Activated CD4-positive, alpha-beta T cell treated with anti-CD3 and anti-CD28 coated beads, Interleukin-2, amount 10 ng/mL, durations not matched to agents 7 days and 5 days (primary cell): ENCODE measurements at regions of chr10 and their contacts with region 1.

Region 1: GRCh38 chr10:73886085-73886529 is 11.8 kb upstream of the CAMK2G start:
- DNase-seq: peak; percentile 79
- H3K4me3 Mint-ChIP-seq: no peak overlapping the region
- H3K27ac Mint-ChIP-seq: no peak overlapping the region
- H3K4me1 Mint-ChIP-seq: peaks cover 9% of the 10 kb centered on the region
- H3K27me3 Mint-ChIP-seq: no peaks in the 10 kb centered on the region

Region 2: DNA sequence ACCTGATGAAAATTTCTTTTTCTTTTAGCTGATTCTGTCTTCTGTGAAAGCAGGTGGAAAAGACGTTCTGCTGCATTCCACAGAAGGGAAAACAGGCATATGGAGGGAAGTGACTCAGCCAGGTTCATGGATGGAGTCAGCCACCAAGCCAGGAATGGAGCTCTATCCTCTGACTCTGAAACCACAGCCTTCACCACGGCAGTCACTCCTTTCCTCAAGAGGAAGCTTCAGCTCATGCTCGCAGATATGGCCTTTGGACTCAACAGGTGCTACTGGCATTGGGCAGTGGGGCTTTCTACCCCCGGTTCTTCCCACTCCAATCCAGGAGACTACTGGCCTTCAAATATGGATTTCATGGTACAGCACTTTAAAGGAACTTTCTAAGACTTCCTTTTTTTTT is 13.3 kb after region 1 on chr10:
- CTCF ChIA-PET with region 1: interaction called, 67 read pairs
- POLR2A ChIA-PET with region 1: no interaction called
- DNase-seq: no peak
- H3K4me3 Mint-ChIP-seq: no peak overlapping the region
- H3K27ac Mint-ChIP-seq: no peak overlapping the region
- H3K4me1 Mint-ChIP-seq: peaks cover 3% of the 10 kb centered on the region
- H3K27me3 Mint-ChIP-seq: peaks cover 19% of the 10 kb centered on the region